ENCODE measurements at regions of chr1 and their contacts with region 1.

Region 1: GRCh38 chr1:203625628-203626019 is 1.0 kb upstream of the ATP2B4 start:
- DNase-seq: peak; percentile 96
- H3K4me3 Mint-ChIP-seq: peak overlapping the region; percentile 75
- H3K27ac Mint-ChIP-seq: peak overlapping the region; percentile 91
- H3K4me1 Mint-ChIP-seq: peaks cover 53% of the 10 kb centered on the region
- H3K27me3 Mint-ChIP-seq: no peaks in the 10 kb centered on the region
- CTCF ChIP-seq: peak; percentile 28

Region 2: DNA sequence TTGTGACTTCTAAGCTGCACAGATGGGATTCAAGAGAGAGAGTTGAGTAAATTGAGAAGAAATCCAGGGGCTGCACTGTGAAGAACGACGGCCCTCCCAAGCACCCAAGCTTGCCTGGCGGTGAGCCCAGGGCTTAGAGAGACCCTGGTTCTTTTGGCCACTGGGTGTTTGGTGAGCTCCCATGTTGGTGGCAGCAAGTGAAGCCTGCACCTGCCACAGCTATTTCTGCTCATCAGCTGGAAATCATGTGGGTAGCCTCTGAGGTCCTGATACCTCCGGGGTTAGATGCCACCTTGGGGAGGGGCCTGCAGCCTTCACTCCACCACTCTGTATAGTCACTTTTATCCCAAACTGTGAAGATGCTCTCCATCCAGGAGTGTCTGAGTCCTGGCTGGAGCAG is 326.5 kb before region 1 on chr1:
- CTCF ChIA-PET with region 1: no interaction called
- POLR2A ChIA-PET with region 1: no interaction called
- intact Hi-C with region 1: no loop called
- DNase-seq: no peak
- H3K4me3 Mint-ChIP-seq: no peak overlapping the region
- H3K27ac Mint-ChIP-seq: no peak overlapping the region
- H3K4me1 Mint-ChIP-seq: peaks cover 11% of the 10 kb centered on the region
- H3K27me3 Mint-ChIP-seq: peaks cover 10% of the 10 kb centered on the region
- CTCF ChIP-seq: no peak

Region 3: GRCh38 chr1:203520315-203520714 is 105.3 kb before region 1 on chr1:
- CTCF ChIA-PET with region 1: interaction called, 3 read pairs
- POLR2A ChIA-PET with region 1: interaction called, 10 read pairs
- intact Hi-C with region 1: no loop called
- DNase-seq: no peak
- H3K4me3 Mint-ChIP-seq: no peak overlapping the region
- H3K27ac Mint-ChIP-seq: no peak overlapping the region
- H3K4me1 Mint-ChIP-seq: peaks cover 10% of the 10 kb centered on the region
- H3K27me3 Mint-ChIP-seq: no peaks in the 10 kb centered on the region
- CTCF ChIP-seq: no peak

Region 4: DNA sequence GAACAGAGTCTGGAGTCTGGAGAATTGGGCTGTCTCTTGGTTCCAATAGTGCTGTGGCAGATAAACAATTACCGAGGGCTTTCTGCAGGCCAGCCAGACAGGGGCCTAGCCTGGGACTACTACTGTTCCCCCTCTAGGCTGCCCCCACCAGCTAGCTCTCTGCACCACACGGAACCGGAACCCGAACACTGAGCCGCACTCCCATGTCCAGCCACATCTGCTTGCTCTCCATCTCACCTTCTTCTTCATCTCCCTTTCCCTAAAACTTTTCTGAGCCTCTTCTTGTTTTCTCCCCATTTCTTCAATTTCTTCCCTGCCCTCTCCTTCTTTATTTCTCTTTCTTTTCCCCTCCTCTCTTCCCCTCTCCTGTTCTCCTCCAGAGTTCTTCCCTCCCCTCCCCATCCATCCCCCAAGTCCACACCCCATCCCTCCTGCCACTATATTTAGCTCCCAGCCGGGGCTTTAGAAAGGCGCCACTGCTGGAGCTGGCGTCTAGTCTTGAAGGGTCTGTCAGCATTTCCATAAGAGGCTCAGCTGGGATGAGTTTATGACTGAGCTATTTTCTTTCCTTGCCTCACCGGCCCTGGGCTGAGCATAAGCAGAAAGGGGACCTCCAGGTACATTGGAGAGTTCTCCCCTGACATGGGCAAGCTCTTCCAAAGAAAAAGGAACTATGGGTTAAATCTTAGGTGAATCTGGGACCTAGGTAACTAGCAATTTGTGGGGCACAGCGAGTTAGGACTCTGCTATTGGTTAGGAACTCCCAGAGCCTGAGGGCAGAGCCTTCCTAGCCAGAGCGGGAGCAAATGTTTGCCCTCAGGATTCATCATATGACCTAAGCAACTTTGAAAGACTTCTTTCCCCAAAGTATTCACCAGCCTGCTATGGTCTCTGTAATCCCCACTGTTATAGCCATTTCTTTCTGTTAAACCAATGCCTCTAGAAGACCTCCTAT is 24.6 kb before region 1 on chr1:
- CTCF ChIA-PET with region 1: interaction called, 24 read pairs
- POLR2A ChIA-PET with region 1: interaction called, 23 read pairs
- intact Hi-C with region 1: no loop called
- DNase-seq: no peak
- H3K4me3 Mint-ChIP-seq: no peak overlapping the region
- H3K27ac Mint-ChIP-seq: no peak overlapping the region
- H3K4me1 Mint-ChIP-seq: peaks cover under 1% of the 10 kb centered on the region
- H3K27me3 Mint-ChIP-seq: peaks cover 15% of the 10 kb centered on the region
- CTCF ChIP-seq: no peak

Region 5: GRCh38 chr1:203649999-203650855 is 24.6 kb after region 1 on chr1:
- CTCF ChIA-PET with region 1: interaction called, 7 read pairs
- POLR2A ChIA-PET with region 1: interaction called, 59 read pairs
- intact Hi-C with region 1: no loop called
- DNase-seq: peak; percentile 88
- H3K4me3 Mint-ChIP-seq: peak overlapping the region; percentile 31
- H3K27ac Mint-ChIP-seq: peak overlapping the region; percentile 53
- H3K4me1 Mint-ChIP-seq: peaks cover 23% of the 10 kb centered on the region
- H3K27me3 Mint-ChIP-seq: no peaks in the 10 kb centered on the region
- CTCF ChIP-seq: no peak

Region 6: GRCh38 chr1:203702130-203702577 is 76.5 kb after region 1 on chr1:
- CTCF ChIA-PET with region 1: interaction called, 26 read pairs
- POLR2A ChIA-PET with region 1: interaction called, 13 read pairs
- intact Hi-C with region 1: loop called (anchors 1 kb)
- DNase-seq: peak; percentile 83
- H3K4me3 Mint-ChIP-seq: no peak overlapping the region
- H3K27ac Mint-ChIP-seq: no peak overlapping the region
- H3K4me1 Mint-ChIP-seq: peaks cover 16% of the 10 kb centered on the region
- H3K27me3 Mint-ChIP-seq: no peaks in the 10 kb centered on the region
- CTCF ChIP-seq: peak; percentile 100

Region 7: GRCh38 chr1:204128964-204129896 is 503.6 kb after region 1 on chr1:
- CTCF ChIA-PET with region 1: no interaction called
- POLR2A ChIA-PET with region 1: no interaction called
- intact Hi-C with region 1: loop called (anchors 5 kb)
- DNase-seq: peak; percentile 86
- H3K4me3 Mint-ChIP-seq: peak overlapping the region; percentile 68
- H3K27ac Mint-ChIP-seq: peak overlapping the region; percentile 63
- H3K4me1 Mint-ChIP-seq: peaks cover 58% of the 10 kb centered on the region
- H3K27me3 Mint-ChIP-seq: no peaks in the 10 kb centered on the region
- CTCF ChIP-seq: peak; percentile 100

Measured in MCF 10A (cell line).